ENCODE measurements at regions of chr13 and their contacts with region 1.

Region 1: DNA sequence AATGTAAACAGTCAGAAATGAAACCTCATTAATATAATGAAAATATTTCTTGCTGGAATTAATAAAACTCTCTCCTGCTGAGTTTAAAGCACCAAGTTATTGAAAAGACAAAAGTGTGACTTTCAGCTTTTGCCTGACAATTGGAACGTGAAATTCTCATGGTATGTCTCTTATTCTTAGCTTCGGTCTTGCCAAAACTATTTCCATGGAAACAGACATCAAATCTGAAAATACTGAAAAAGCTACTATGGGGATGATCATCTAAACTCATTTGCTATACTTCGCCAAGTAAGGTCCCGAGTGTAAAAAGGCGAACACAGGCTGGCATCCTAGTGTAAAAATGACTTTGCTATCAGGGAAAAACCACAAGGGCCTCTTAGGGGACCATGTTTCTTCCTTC is 22.8 kb downstream of the HTR2A start:
- DNase-seq: no peak
- H3K4me3 Mint-ChIP-seq: no peak overlapping the region
- H3K27ac Mint-ChIP-seq: no peak overlapping the region
- H3K4me1 Mint-ChIP-seq: no peaks in the 10 kb centered on the region
- H3K27me3 Mint-ChIP-seq: peaks cover 36% of the 10 kb centered on the region

Region 2: DNA sequence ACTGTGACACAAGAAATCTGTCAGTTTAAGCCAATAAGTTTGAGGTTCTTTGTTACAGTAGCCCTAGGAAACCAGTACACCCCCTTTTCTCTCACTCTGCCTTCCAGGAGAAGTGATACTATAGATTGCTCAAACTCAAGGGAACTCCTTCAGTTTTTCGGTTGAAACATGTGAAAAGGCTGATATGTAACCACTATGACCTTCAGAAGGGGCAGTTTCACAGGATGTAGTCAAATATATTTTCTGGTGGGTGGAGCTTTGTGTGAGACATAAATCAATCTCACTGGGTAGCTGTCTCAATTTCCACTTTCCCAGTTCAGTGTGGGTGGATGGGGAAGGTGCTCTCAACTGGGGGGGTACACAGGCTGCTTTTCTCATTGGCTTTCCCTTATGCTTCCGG is 18.8 kb before region 1 on chr13:
- CTCF ChIA-PET with region 1: no interaction called
- POLR2A ChIA-PET with region 1: no interaction called
- DNase-seq: no peak
- H3K4me3 Mint-ChIP-seq: no peak overlapping the region
- H3K27ac Mint-ChIP-seq: no peak overlapping the region
- H3K4me1 Mint-ChIP-seq: no peaks in the 10 kb centered on the region
- H3K27me3 Mint-ChIP-seq: peaks cover 10% of the 10 kb centered on the region

Region 3: GRCh38 chr13:46893798-46894560 is 20.0 kb after region 1 on chr13:
- CTCF ChIA-PET with region 1: interaction called, 10 read pairs
- POLR2A ChIA-PET with region 1: no interaction called
- DNase-seq: peak; percentile 62
- H3K4me3 Mint-ChIP-seq: peak overlapping the region; percentile 15
- H3K27ac Mint-ChIP-seq: no peak overlapping the region
- H3K4me1 Mint-ChIP-seq: peaks cover 14% of the 10 kb centered on the region
- H3K27me3 Mint-ChIP-seq: peaks cover 71% of the 10 kb centered on the region